Heart left ventricle (tissue), 16 donors: ENCODE measurements at regions of chr11 and their contacts with region 1.

Region 1: DNA sequence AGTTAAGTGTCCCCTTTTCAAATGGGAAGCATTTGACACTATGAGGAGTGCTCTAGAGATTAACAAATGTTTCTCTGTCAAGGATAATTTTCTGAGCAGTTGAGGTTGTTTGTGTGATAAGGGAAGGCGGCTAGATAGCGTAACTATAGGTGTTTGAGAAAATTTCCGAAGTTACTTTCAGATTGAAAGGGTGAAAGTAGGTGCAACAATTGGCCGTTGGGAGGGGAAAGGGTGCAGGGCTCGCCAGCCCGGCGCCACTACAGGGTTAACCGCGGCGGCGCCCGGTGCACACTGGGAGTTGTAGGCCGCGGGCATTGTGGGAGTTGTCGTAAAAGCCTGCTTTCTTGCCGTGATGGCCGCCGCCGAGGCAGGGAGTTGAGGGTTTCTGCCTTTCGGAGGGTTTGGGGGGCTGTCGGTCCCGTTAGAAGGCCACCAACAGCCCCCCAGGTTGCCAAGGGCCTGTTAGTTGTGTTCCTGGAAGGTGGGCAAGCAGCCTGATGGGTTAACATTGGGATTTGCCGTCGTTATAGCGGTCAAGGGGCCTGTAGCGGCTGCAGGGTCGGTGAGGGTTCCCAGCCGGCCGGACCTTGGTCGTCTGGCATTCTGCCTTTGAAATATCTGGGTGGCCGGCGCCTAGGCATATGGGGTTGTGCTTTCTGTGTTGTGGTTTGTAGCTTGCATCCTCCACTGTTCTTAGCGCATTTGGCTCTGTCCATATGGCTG is 36.5 kb upstream of the HSD17B12 start:
- DNase-seq: peak; percentile 85 to 93 (median 89)
- ATAC-seq: peak; percentile 100
- H3K4me3 ChIP-seq: peak overlapping the region; percentile 67 to 94 (median 87)
- H3K27ac ChIP-seq: peak overlapping the region in 11 of 12 donors; percentile 58 to 87 (median 80)
- H3K4me1 ChIP-seq: peaks cover 0 to 22% (median 11%) of the 10 kb centered on the region in 12 donors
- H3K27me3 ChIP-seq: peaks cover 0 to 37% (median 16%) of the 10 kb centered on the region in 9 donors
- CTCF ChIP-seq: peak in 1 of 12 donors; percentile 18
- POLR2A ChIP-seq: peak in 1 of 2 donors; percentile 43

Region 2: GRCh38 chr11:43680521-43681400 is 36.7 kb after region 1 on chr11 and contains the start of gene HSD17B12:
- intact Hi-C with region 1: loop called in 4 of 10 experiments (anchors 1 to 5 kb)
- DNase-seq: peak; percentile 99 to 100 (median 100)
- ATAC-seq: peak; percentile 100
- H3K4me3 ChIP-seq: peak within 1 kb of the TSS; percentile 75 to 98 (median 90)
- H3K27ac ChIP-seq: peak within 1 kb of the TSS; percentile 42 to 98 (median 92)
- H3K4me1 ChIP-seq: peaks cover 0 to 43% (median 24%) of the 10 kb centered on the region in 12 donors
- H3K27me3 ChIP-seq: no peaks in the 10 kb centered on the region
- CTCF ChIP-seq: peak in 1 of 12 donors; percentile 26
- POLR2A ChIP-seq: peak in 1 of 2 donors; percentile 93
- total RNA-seq, gene HSD17B12: 40.5 to 114 (median 80.1) TPM

Region 3: GRCh38 chr11:43802509-43802908 is 158.4 kb after region 1 on chr11:
- intact Hi-C with region 1: loop called in 1 of 10 experiments (anchors 10 kb)
- DNase-seq: no peak
- ATAC-seq: no peak
- H3K4me3 ChIP-seq: no peak overlapping the region
- H3K27ac ChIP-seq: no peak overlapping the region
- H3K4me1 ChIP-seq: no peaks in the 10 kb centered on the region
- H3K27me3 ChIP-seq: no peaks in the 10 kb centered on the region
- CTCF ChIP-seq: peak in 5 of 12 donors; percentile 13 to 31 (median 16)
- POLR2A ChIP-seq: no peak

Region 4: GRCh38 chr11:43852057-43852636 is 208.1 kb after region 1 on chr11:
- intact Hi-C with region 1: loop called in 1 of 10 experiments (anchors 10 kb)
- DNase-seq: peak in 4 of 5 donors; percentile 21 to 34 (median 32)
- ATAC-seq: peak; percentile 51 to 72 (median 66)
- H3K4me3 ChIP-seq: no peak overlapping the region
- H3K27ac ChIP-seq: no peak overlapping the region
- H3K4me1 ChIP-seq: no peaks in the 10 kb centered on the region
- H3K27me3 ChIP-seq: no peaks in the 10 kb centered on the region
- CTCF ChIP-seq: peak; percentile 67 to 83 (median 72)
- POLR2A ChIP-seq: no peak